Testis (tissue), 5 donors: ENCODE measurements at regions of chr9 and their contacts with region 1.

Region 1: DNA sequence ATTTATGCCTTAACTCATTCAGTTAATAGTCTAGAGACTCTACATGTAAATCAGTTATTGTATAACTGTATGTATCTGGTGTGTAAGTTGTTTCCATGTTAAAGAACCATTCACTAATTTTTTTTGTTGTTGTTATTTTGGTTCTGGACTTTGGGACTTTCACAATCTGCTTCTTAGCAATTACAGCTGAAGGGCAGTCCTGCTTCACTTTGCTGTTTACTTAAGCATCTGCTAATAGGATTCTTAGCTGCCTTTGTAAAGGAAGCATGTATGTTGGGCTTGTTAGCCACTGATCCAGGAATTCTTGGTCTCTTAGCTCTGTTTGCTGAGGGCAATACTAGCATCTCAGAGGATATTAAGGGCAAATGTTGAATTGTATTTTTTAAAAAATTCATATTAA is 97.0 kb downstream of the FOCAD start:
- DNase-seq: no peak
- H3K4me3 ChIP-seq: no peak overlapping the region
- H3K27ac ChIP-seq: no peak overlapping the region
- H3K4me1 ChIP-seq: no peaks in the 10 kb centered on the region
- H3K27me3 ChIP-seq: no peaks in the 10 kb centered on the region
- CTCF ChIP-seq: no peak
- POLR2A ChIP-seq: no peak

Region 2: GRCh38 chr9:19036611-19037010 is 1744.5 kb before region 1 on chr9:
- intact Hi-C with region 1: loop called (anchors 5 kb)
- DNase-seq: no peak
- H3K4me3 ChIP-seq: no peak overlapping the region
- H3K27ac ChIP-seq: no peak overlapping the region
- H3K4me1 ChIP-seq: no peaks in the 10 kb centered on the region
- H3K27me3 ChIP-seq: no peaks in the 10 kb centered on the region
- CTCF ChIP-seq: no peak
- POLR2A ChIP-seq: no peak